Thyroid gland (tissue), 4 donors: ENCODE measurements at regions of chr19 and their contacts with region 1.

Region 1: DNA sequence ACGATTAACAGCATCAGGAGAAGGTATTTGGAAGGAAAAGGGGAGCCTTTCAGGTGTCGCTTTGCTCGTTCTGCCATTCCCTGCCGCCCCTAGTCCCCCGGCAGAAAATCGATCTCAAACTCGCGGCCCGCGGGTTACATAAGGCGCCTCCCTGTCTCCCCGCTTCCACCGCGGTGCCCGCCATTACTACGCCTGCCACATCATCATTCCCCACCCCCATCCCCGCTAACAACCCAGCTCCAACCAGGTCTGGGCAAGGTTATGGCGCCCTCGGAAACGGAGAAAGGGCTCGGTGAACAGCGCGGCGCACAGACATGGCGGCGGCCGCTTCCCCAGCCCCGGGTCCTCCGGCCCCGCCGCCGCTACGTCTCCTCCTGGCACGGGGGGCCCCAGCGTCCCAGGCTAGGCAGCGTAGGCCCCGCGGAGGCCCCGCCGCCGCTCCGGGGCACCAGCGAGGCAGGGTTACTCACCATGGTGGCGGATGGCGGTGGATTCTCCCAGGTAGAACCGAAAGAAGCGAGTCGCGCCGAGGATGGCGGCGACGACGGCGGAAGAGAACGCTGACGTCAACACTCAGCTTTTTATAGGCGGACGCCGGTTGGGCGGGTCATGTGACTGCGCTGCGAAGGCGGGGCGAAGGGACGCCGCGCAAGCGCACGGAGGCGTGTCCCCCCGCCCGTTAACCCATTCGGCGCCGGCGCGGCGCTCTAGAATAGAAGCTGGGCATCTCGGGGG is at the start of gene EEF2:
- DNase-seq: peak; percentile 82 to 86
- H3K4me3 ChIP-seq: peak within 1 kb of the TSS; percentile 74 to 100 (median 85)
- H3K27ac ChIP-seq: peak within 1 kb of the TSS; percentile 98 to 99 (median 98)
- H3K4me1 ChIP-seq: peaks cover 24 to 40% of the 10 kb centered on the region in 2 donors
- H3K27me3 ChIP-seq: no peaks in the 10 kb centered on the region
- CTCF ChIP-seq: peak in 1 of 6 experiments; percentile 27
- POLR2A ChIP-seq: peak; percentile 98 to 100
- total RNA-seq, gene EEF2: 1,432 to 2,189 (median 1,729) TPM

Region 2: DNA sequence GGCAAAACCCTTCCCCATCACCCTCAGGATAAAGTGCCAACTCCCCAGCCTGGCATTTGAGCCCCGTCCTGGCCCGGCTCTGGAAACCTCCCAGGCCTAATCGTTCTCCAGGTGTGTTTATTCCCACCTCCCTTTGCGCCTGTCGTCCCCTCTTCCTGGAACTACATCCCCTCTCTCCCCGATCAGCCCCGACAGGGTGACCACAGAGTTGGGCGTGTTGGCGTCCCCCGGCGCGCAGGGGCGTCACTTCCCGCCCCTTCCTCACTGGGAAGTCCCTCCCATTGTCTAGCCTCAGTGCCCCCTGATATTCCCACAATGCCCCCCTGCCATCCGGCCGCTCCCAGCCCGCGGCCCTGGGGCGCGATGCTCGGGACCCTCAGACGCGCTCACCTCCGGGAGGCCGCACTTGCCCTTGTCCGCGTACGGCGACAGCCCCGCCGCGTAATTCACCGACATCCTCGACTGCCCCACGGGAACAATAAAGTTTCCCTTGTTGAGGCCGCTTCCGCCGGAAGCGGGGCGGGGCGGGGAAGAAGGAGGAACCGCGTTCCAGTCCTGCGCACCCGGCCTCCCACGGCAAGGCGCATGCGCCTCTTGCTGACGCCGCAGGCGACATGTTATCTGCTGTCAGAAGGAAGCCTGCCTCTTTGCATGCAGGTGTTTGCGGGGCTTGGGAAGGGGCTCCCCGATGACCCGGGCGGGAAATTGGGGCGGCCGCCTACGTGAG is 197.2 kb after region 1 on chr19 and contains the starts of genes ANKRD24 and SIRT6:
- intact Hi-C with region 1: loop called (anchors 10 kb)
- DNase-seq: peak; percentile 96
- H3K4me3 ChIP-seq: peak within 1 kb of the TSS; percentile 84 to 97 (median 88)
- H3K27ac ChIP-seq: peak within 1 kb of the TSS; percentile 4 to 77 (median 57)
- H3K4me1 ChIP-seq: peaks cover 15 to 16% of the 10 kb centered on the region in 2 donors
- H3K27me3 ChIP-seq: no peaks in the 10 kb centered on the region
- CTCF ChIP-seq: no peak
- POLR2A ChIP-seq: peak in 1 of 2 donors; percentile 69
- total RNA-seq, gene ANKRD24: 0.54 to 1.2 (median 0.77) TPM
- total RNA-seq, gene SIRT6: 11.9 to 39.3 (median 20.0) TPM